CD8-positive, alpha-beta T cell (primary cell): ENCODE measurements at regions of chr4 and their contacts with region 1.

Region 1: DNA sequence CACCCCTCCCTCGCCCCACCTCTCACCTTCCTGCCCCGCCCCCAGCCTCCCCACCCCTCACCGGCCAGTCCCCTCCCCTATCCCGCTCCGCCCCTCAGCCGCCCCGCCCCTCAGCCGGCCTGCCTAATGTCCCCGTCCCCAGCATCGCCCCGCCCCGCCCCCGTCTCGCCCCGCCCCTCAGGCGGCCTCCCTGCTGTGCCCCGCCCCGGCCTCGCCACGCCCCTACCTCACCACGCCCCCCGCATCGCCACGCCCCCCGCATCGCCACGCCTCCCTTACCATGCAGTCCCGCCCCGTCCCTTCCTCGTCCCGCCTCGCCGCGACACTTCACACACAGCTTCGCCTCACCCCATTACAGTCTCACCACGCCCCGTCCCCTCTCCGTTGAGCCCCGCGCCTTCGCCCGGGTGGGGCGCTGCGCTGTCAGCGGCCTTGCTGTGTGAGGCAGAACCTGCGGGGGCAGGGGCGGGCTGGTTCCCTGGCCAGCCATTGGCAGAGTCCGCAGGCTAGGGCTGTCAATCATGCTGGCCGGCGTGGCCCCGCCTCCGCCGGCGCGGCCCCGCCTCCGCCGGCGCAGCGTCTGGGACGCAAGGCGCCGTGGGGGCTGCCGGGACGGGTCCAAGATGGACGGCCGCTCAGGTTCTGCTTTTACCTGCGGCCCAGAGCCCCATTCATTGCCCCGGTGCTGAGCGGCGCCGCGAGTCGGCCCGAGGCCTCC is at the starts of genes HTT and HTT-AS:
- DNase-seq: peak; percentile 93 to 98 (median 97)
- ATAC-seq: peak; percentile 83
- H3K4me3 ChIP-seq: peak within 1 kb of the TSS; percentile 88 to 100
- H3K4me3 Mint-ChIP-seq: peak within 1 kb of the TSS; percentile 93
- H3K27ac ChIP-seq: peak within 1 kb of the TSS; percentile 69 to 89
- H3K27ac Mint-ChIP-seq: peak within 1 kb of the TSS; percentile 95
- H3K4me1 ChIP-seq: peaks cover 18% of the 10 kb centered on the region
- H3K4me1 Mint-ChIP-seq: peaks cover 25% of the 10 kb centered on the region
- H3K27me3 ChIP-seq: no peaks in the 10 kb centered on the region
- H3K27me3 Mint-ChIP-seq: no peaks in the 10 kb centered on the region
- CTCF ChIP-seq: no peak
- total RNA-seq, gene HTT: 60.3 to 69.4 TPM
- total RNA-seq, gene HTT-AS: not detected

Region 2: GRCh38 chr4:1712216-1713002 is 1361.8 kb before region 1 on chr4 and contains the start of gene SLBP:
- CTCF ChIA-PET with region 1: no interaction called
- POLR2A ChIA-PET with region 1: no interaction called
- intact Hi-C with region 1: loop called in 1 of 2 experiments (anchors 10 kb)
- DNase-seq: peak; percentile 96 to 99 (median 99)
- ATAC-seq: peak; percentile 87
- H3K4me3 ChIP-seq: peak within 1 kb of the TSS; percentile 82 to 95
- H3K4me3 Mint-ChIP-seq: peak within 1 kb of the TSS; percentile 94
- H3K27ac ChIP-seq: peak within 1 kb of the TSS; percentile 95 to 97
- H3K27ac Mint-ChIP-seq: peak within 1 kb of the TSS; percentile 94
- H3K4me1 ChIP-seq: peaks cover 42% of the 10 kb centered on the region
- H3K4me1 Mint-ChIP-seq: peaks cover 60% of the 10 kb centered on the region
- H3K27me3 ChIP-seq: no peaks in the 10 kb centered on the region
- H3K27me3 Mint-ChIP-seq: no peaks in the 10 kb centered on the region
- CTCF ChIP-seq: no peak
- total RNA-seq, gene SLBP: 61.2 to 62.6 TPM

Region 3: DNA sequence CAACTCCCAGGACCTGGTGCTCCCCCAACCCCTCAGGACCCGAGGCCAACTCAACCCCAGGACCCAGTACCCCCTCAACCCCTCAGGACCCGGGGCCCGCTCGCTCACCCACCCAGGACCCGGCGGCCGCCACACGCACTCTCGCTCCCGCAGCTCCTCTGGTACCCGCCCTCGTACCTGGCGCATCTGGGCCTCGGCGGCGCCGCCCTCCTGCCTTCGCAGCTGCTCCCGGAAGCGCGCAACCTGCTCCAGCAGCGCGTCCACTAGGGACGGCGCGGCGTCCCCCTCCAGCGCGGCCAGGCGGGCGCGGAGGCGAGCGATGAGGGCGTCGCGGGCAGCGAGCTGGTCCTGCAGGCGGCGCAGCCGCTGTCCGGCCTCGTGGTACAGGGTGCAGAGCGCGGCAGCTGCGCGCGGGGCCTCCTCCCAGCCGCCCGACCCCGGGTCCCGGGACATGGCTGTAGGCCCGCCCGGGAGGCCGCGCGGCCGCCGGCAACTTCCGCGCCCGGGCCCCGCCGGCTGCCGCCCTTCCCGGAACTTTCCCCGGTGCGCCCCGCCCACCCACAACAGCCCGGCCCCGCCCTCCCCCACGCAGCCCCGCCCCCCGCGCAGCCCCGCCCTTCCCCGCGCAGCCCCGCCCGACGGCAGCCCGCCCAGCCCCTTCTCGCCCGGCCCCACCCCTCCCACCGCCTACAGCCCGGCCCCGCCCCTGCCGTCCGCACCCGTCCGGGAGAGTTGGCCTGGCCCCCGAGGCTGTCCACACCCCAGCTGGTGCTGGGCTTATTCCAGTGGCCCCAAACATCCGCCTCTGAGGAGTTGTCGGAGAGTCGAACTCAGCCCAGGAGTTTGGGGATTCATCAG is 318.2 kb before region 1 on chr4 and contains the start of gene TNIP2:
- CTCF ChIA-PET with region 1: no interaction called
- POLR2A ChIA-PET with region 1: no interaction called
- intact Hi-C with region 1: loop called (anchors 1 kb)
- DNase-seq: peak; percentile 55 to 88 (median 75)
- ATAC-seq: peak; percentile 83
- H3K4me3 ChIP-seq: peak within 1 kb of the TSS; percentile 57 to 65
- H3K4me3 Mint-ChIP-seq: peak within 1 kb of the TSS; percentile 76
- H3K27ac ChIP-seq: peak within 1 kb of the TSS; percentile 19 to 63
- H3K27ac Mint-ChIP-seq: peak within 1 kb of the TSS; percentile 67
- H3K4me1 ChIP-seq: peaks cover 17% of the 10 kb centered on the region
- H3K4me1 Mint-ChIP-seq: peaks cover 37% of the 10 kb centered on the region
- H3K27me3 ChIP-seq: no peaks in the 10 kb centered on the region
- H3K27me3 Mint-ChIP-seq: no peaks in the 10 kb centered on the region
- CTCF ChIP-seq: peak; percentile 22
- total RNA-seq, gene TNIP2: 50.9 to 56.5 TPM

Region 4: DNA sequence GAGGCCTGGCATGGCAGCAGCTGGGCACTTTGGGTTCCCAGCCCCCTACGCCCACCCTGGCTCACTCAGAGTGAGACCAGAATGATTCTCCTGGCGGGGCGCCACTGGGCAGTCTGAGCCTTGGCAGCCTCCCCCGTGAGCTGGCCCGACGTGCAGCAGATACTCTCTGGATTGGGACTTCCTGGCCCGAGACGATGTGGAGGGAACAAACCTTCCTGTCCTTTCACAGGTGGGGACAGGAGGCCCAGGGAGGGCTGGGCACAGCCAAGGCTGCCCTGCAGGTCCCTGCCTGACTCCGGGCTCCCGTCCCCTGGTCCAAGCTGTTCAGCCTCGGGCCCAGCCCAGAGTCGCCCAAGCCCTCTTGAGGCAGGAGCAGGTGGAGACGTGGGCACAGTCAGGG is 248.5 kb before region 1 on chr4:
- CTCF ChIA-PET with region 1: no interaction called
- POLR2A ChIA-PET with region 1: no interaction called
- intact Hi-C with region 1: no loop called
- DNase-seq: no peak
- ATAC-seq: no peak
- H3K4me3 ChIP-seq: no peak overlapping the region
- H3K4me3 Mint-ChIP-seq: no peak overlapping the region
- H3K27ac ChIP-seq: no peak overlapping the region
- H3K27ac Mint-ChIP-seq: no peak overlapping the region
- H3K4me1 ChIP-seq: no peaks in the 10 kb centered on the region
- H3K4me1 Mint-ChIP-seq: peaks cover 5% of the 10 kb centered on the region
- H3K27me3 ChIP-seq: no peaks in the 10 kb centered on the region
- H3K27me3 Mint-ChIP-seq: no peaks in the 10 kb centered on the region
- CTCF ChIP-seq: no peak

Region 5: GRCh38 chr4:3047464-3048286 is 26.6 kb before region 1 on chr4:
- CTCF ChIA-PET with region 1: interaction called, 3 read pairs
- POLR2A ChIA-PET with region 1: interaction called, 3 read pairs
- intact Hi-C with region 1: loop called (anchors 1 to 2 kb)
- DNase-seq: peak; percentile 44 to 87 (median 64)
- ATAC-seq: peak; percentile 73
- H3K4me3 ChIP-seq: peak overlapping the region; percentile 44 to 50
- H3K4me3 Mint-ChIP-seq: peak overlapping the region; percentile 78
- H3K27ac ChIP-seq: peak overlapping the region; percentile 27 to 79
- H3K27ac Mint-ChIP-seq: peak overlapping the region; percentile 60
- H3K4me1 ChIP-seq: peaks cover 15% of the 10 kb centered on the region
- H3K4me1 Mint-ChIP-seq: peaks cover 29% of the 10 kb centered on the region
- H3K27me3 ChIP-seq: no peaks in the 10 kb centered on the region
- H3K27me3 Mint-ChIP-seq: no peaks in the 10 kb centered on the region
- CTCF ChIP-seq: peak; percentile 61

Region 6: GRCh38 chr4:3531879-3532713 is 457.9 kb after region 1 on chr4 and contains the start of gene LRPAP1:
- CTCF ChIA-PET with region 1: no interaction called
- POLR2A ChIA-PET with region 1: no interaction called
- intact Hi-C with region 1: loop called in 1 of 2 experiments (anchors 1 kb)
- DNase-seq: peak; percentile 63 to 92 (median 86)
- ATAC-seq: peak; percentile 94
- H3K4me3 ChIP-seq: peak within 1 kb of the TSS; percentile 90 to 93
- H3K4me3 Mint-ChIP-seq: peak within 1 kb of the TSS; percentile 98
- H3K27ac ChIP-seq: peak within 1 kb of the TSS; percentile 58 to 76
- H3K27ac Mint-ChIP-seq: peak within 1 kb of the TSS; percentile 96
- H3K4me1 ChIP-seq: peaks cover 35% of the 10 kb centered on the region
- H3K4me1 Mint-ChIP-seq: peaks cover 39% of the 10 kb centered on the region
- H3K27me3 ChIP-seq: no peaks in the 10 kb centered on the region
- H3K27me3 Mint-ChIP-seq: no peaks in the 10 kb centered on the region
- CTCF ChIP-seq: no peak
- total RNA-seq, gene LRPAP1: 94.6 to 97.4 TPM